Naive thymus-derived CD8-positive, alpha-beta T cell (primary cell): ENCODE measurements at regions of chr6 and their contacts with region 1.

Region 1: GRCh38 chr6:53651764-53652401 is 13.7 kb downstream of the KLHL31 start:
- DNase-seq: peak; percentile 67 to 90 (median 76)
- ATAC-seq: peak; percentile 88 to 90
- H3K4me3 Mint-ChIP-seq: peak overlapping the region; percentile 89 to 99 (median 92)
- H3K27ac Mint-ChIP-seq: peak overlapping the region; percentile 81 to 95 (median 93)
- H3K4me1 Mint-ChIP-seq: peaks cover 14 to 34% (median 25%) of the 10 kb centered on the region in 4 donors
- H3K27me3 Mint-ChIP-seq: no peaks in the 10 kb centered on the region

Region 2: DNA sequence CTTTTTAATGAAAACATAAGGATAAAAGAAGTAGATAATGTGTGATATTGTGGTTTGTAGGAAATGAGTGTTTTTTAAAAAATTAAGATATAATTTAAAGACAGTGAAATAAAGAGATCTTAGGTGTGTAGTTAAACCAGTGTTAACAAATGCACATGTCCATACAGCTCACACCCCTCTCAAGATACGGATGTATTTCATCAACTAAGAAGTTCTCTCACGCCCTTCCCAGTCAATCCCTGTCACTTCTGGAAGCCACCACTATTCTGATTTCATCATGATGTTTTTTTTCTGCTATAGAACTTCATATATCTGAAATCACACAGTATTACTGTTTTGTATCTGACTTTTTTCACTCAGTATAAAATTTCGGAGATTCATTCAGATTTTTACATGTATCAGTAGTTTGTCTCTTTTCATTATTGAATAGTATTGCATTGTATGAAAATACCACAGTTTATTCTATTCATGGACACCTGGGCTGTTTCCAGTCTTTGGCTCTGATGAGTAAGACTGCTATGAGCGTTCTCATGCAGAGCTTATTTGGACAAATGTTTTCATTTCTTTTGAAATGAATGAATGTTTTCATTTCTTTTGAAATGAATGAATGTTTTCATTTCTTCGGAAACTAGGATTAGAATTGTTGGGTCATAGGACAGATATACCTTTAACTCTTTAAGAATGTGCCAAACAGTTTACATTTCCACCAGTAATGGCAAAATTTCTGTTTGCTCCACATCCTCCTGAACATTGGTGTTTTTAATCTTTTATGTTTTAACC is 253.4 kb before region 1 on chr6:
- POLR2A ChIA-PET with region 1: no interaction called
- DNase-seq: no peak
- ATAC-seq: no peak
- H3K4me3 Mint-ChIP-seq: no peak overlapping the region
- H3K27ac Mint-ChIP-seq: no peak overlapping the region
- H3K4me1 Mint-ChIP-seq: no peaks in the 10 kb centered on the region
- H3K27me3 Mint-ChIP-seq: no peaks in the 10 kb centered on the region

Region 3: GRCh38 chr6:53544470-53545308 is 107.2 kb before region 1 on chr6 and contains the start of gene GCLC:
- POLR2A ChIA-PET with region 1: interaction called, 28 read pairs
- DNase-seq: peak; percentile 77 to 93 (median 86)
- ATAC-seq: peak; percentile 65 to 68
- H3K4me3 Mint-ChIP-seq: peak within 1 kb of the TSS; percentile 82 to 98 (median 98)
- H3K27ac Mint-ChIP-seq: peak within 1 kb of the TSS; percentile 90 to 96 (median 94)
- H3K4me1 Mint-ChIP-seq: peaks cover 29 to 70% (median 66%) of the 10 kb centered on the region in 4 donors
- H3K27me3 Mint-ChIP-seq: no peaks in the 10 kb centered on the region
- polyA plus RNA-seq, gene GCLC: 9.2 to 13.5 (median 10.1) TPM

Region 4: GRCh38 chr6:53691667-53692133 is 39.8 kb after region 1 on chr6:
- POLR2A ChIA-PET with region 1: no interaction called
- DNase-seq: no peak
- ATAC-seq: no peak
- H3K4me3 Mint-ChIP-seq: no peak overlapping the region
- H3K27ac Mint-ChIP-seq: no peak overlapping the region
- H3K4me1 Mint-ChIP-seq: no peaks in the 10 kb centered on the region
- H3K27me3 Mint-ChIP-seq: peaks cover 0 to 15% (median 0%) of the 10 kb centered on the region in 5 donors

Region 5: DNA sequence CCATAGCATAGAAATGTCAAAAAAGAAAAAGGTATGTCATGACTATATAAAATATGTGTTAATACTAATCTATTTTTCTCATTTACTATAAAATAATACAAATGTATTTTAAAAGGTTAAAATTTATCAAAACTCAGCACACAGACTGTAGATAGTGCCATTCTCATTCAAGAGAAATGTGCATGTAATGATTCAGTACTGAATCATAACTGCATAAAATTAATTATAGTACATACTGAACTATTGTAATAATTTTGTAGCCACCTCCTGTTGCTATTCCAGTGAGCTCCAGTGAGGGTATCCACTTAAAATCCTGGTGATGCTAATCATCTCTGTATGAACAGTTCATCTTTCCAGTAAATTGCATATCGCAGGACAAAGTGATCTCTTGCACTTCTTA is 1844.3 kb after region 1 on chr6:
- POLR2A ChIA-PET with region 1: no interaction called
- DNase-seq: no peak
- ATAC-seq: no peak
- H3K4me3 Mint-ChIP-seq: no peak overlapping the region
- H3K27ac Mint-ChIP-seq: no peak overlapping the region
- H3K4me1 Mint-ChIP-seq: no peaks in the 10 kb centered on the region
- H3K27me3 Mint-ChIP-seq: no peaks in the 10 kb centered on the region